ENCODE measurements at regions of chr19 and their contacts with region 1.

Region 1: DNA sequence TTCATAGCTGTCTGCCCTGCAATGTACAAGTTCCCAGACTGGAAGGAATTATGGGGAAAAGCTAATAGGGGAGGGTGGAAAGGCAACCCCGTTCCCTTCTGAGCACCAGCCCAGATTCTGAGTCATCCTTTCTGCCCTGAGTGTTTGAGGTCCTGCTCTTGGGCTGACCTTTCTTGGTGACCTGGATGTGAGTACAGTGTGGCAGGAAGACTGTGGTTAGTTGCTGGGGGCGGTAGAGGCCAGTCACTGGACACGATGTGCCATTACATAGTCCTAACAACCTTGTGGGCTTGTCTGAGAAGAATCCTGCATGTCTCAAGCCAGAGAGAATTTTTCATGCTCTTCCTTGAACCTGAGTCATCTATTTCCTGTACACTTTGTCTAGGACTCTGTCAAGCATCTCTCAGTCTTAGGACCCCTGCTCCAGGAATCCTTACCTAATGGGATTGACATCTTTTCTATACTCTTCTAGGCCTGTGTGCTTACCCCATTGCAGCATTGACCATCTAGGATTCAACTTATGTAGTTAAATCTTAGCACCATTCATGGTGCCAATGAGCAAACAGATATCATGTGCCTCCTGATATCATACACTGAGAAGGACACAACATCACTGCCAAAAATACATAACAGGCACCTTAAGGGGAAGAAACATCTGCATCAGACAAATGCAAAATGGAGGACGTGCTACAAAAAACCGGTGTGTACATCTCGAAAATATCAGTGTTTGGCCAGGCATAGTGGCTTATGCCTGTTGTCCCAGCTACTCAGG is 8.1 kb upstream of the ANGPTL4 start:
- DNase-seq: peak; percentile 95
- H3K4me3 ChIP-seq: no peak overlapping the region
- H3K27me3 ChIP-seq: no peaks in the 10 kb centered on the region; the same call in 1 of the 2 replicates
- CTCF ChIP-seq: no peak

Region 2: GRCh38 chr19:8342684-8343482 is 12.9 kb before region 1 on chr19 and contains the start of gene KANK3:
- CTCF ChIA-PET with region 1: interaction called, 19 read pairs
- POLR2A ChIA-PET with region 1: no interaction called
- DNase-seq: no peak
- H3K4me3 ChIP-seq: peak within 1 kb of the TSS; percentile 35
- H3K27me3 ChIP-seq: peaks cover 21% of the 10 kb centered on the region
- CTCF ChIP-seq: no peak
- polyA plus RNA-seq, gene KANK3: 0.02 TPM in 1 of 2 replicates, not detected in the other

Region 3: GRCh38 chr19:8396563-8397203 is 40.9 kb after region 1 on chr19:
- CTCF ChIA-PET with region 1: interaction called, 67 read pairs
- POLR2A ChIA-PET with region 1: no interaction called
- DNase-seq: no peak
- H3K4me3 ChIP-seq: no peak overlapping the region
- H3K27me3 ChIP-seq: no peaks in the 10 kb centered on the region
- CTCF ChIP-seq: peak; percentile 78

Region 4: DNA sequence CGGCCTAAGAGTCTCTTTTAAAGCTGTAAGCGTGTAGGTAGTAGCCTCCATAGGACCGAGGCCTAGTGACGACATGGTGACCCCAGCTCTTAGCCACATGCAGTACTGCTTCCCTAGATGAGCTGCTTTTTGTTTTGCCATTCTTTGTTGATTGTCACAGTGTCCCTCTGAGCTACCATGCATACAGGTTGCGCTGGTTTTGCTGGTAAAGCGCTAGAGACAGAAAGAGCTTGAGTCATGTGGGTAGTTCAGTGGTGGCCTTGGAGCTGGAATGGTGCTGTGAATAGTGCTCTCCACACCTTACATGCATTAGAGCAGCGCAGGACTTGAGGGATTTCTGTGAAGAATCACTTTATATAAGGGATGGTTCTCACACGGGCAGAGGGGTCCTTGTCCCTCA is 94.0 kb after region 1 on chr19:
- CTCF ChIA-PET with region 1: interaction called, 15 read pairs
- POLR2A ChIA-PET with region 1: no interaction called
- DNase-seq: no peak
- H3K4me3 ChIP-seq: no peak overlapping the region
- H3K27me3 ChIP-seq: no peaks in the 10 kb centered on the region
- CTCF ChIP-seq: no peak

Region 5: DNA sequence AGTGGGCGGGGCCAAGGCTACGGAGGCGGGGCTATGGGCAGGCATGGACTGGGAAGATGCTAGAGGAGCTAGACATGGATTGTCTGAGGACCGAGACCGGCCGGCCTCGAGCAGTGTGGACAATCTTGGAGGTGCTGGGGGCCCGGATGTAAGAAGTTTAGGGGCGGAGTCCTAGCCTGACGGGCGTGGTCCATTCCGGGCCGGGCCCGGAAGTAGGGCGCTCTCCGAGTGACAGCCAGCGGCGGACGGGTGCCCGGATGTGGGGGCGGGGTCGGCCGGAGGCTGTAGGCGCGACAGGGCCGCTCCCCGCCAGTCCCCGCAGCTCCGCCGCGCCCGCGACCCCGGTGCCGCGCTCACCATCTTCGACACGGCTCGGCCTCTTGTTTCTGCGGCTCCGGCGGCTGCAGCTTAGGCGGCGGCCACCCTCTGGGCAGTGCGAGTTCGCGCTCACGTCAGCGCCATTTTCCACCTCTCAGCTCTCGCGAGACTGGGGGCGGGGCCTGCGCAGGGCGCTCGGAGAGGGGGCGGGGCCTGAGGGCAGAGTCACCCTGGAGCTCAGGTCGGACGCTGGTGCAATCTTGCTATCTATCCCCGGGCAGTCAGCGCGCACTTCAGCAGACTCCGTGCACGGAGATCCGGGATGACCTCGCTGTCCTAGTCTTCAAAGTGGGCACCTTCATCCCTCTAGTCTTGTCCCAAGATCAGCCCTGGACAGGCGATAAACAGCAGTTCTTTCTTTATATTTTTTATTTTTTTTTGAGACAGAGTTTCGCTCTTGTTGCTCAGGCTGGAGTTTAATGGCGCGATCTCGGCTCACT is 158.1 kb after region 1 on chr19 and contains the start of gene ZNF414:
- CTCF ChIA-PET with region 1: interaction called, 33 read pairs
- POLR2A ChIA-PET with region 1: no interaction called
- DNase-seq: peak; percentile 89
- H3K4me3 ChIP-seq: peak within 1 kb of the TSS; percentile 84
- H3K27me3 ChIP-seq: no peaks in the 10 kb centered on the region
- CTCF ChIP-seq: no peak
- polyA plus RNA-seq, gene ZNF414: 3.7 and 5.7 TPM in 2 replicates

Region 6: DNA sequence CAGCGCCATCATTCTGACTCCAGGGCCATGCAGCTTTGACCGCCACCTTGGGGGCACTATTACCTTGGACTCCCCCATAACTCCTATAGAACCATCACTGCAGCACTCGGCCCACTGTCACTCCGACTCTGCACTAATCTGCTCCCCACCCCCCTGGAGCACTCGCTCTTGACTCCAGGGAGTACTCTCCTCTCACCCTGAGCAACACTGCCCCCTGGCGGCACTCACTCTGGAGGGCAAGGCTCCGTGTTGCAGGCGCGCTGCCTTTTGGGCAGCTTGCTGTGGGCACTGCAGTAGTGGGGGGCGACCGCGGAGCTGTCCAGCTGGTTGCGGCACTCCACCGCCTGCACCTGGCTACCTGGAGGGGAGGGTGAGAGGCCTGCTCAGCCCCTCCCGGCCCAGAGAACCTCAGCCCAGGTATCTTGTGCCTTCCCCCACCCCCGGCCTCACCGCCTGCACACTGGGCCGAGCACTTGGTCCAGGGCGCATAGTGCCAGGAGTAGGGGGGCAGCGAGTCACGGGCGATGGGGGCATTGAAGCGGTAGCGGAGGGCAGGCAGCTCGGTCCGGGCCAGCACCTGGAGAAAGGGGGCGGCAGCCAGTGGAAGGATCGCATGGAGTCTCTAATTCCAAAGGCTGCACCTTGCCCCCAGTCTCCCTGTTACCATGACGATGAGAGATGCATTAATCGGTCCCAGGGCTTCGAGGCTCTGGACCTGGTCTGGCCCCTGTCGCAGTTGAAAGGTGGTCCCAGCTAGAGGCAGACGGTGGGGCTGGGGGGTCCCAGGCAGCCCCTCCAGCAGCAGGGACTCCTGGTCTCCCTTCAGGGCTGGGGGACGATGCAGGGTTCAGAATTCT is 230.3 kb after region 1 on chr19:
- CTCF ChIA-PET with region 1: interaction called, 75 read pairs
- POLR2A ChIA-PET with region 1: no interaction called
- DNase-seq: no peak
- H3K4me3 ChIP-seq: no peak overlapping the region
- H3K27me3 ChIP-seq: no peaks in the 10 kb centered on the region
- CTCF ChIP-seq: peak; percentile 62

Region 7: DNA sequence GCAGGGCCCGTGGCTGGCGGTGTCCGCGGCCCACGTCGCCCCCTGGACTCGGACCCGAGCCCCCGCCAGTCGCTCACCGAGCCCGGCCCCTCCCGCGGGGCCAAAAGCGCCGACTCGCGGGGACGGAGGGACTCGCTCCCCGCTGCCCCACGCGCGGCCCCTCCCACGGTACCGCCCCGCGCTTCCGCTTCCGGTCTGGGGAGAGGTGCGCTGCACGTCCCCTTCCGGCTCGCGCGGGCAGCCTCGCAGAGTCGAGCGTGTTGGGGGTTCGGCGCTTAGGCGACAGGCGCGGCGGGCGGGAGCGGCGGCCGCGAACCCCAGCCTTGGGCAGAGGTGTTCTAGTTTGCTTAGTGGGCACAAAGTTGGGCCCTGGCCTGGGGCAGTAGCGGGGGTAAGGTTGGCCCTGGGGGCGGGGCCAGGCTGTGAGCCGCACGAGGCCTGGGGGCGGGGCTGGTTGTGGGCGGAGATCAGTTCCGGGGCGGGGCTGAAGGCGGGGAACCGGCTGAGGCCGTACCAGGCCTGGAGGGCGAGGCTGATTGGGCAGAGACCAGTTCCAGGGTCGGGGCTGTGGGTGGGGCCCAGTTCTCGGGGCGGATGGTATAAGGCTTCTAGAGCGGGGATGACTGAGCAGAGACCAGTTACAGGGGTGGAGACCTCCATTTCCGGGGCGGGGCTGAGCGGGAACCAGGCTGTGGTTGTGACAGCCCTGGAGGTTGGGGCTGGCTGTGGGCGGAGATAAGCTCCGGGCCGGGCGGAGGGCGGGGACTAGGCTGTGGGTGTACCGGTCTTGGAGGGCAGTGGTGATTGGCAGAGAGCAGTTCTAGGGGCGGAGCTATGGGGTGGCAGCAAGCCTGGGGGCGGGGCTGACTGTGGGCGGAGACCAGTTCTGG is 476.6 kb after region 1 on chr19 and contains the starts of genes MBD3L1 and ZNF558:
- CTCF ChIA-PET with region 1: no interaction called
- POLR2A ChIA-PET with region 1: no interaction called
- DNase-seq: peak; percentile 93
- H3K4me3 ChIP-seq: peak within 1 kb of the TSS; percentile 60
- H3K27me3 ChIP-seq: no peaks in the 10 kb centered on the region
- CTCF ChIP-seq: peak; percentile 11; the same call in 1 of the 2 replicates
- polyA plus RNA-seq, gene MBD3L1: not detected in 2 replicates
- polyA plus RNA-seq, gene ZNF558: 16.9 and 17.5 TPM in 2 replicates